GM18951 (cell line): ENCODE measurements at regions of chr16 and their contacts with region 1.

Region 1: DNA sequence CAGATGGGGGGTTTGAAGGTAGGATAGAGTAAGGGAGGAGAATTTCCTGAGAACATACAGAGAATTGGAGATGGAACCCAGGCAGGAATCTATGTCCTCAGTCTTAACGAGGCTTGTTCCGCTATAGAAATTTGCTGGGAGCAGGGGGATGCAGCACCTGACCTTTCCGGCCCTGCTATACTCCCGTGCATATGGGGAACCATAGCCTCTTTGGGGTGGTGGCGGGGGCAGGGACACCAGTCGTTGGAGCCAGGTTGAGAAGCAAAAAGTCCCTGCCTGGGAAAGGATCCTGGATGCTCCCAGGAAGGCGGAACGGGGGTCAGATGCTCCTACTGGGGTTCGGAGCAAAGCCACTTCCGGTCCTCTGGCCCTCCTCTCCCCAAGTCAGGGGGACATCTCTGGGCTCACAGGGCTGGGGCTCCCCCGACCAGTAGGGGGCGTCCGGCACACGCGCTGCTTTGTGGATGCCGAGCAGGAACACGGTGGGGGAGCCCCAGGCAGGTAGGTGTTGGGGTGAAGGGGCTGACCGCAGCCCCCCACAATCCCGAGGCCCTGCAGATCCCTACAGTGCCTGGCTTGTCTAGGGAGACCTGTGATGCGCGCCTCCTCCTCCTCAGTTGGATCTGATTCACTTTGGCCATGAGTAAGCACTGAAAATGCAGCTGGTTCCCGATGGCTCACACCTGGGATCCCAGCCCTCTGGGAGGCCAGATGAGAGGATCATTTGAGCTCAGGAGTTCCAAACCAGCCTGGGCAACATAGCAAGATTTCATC is 15.5 kb upstream of the TFAP4 start:
- POLR2A ChIP-seq: no peak

Region 2: DNA sequence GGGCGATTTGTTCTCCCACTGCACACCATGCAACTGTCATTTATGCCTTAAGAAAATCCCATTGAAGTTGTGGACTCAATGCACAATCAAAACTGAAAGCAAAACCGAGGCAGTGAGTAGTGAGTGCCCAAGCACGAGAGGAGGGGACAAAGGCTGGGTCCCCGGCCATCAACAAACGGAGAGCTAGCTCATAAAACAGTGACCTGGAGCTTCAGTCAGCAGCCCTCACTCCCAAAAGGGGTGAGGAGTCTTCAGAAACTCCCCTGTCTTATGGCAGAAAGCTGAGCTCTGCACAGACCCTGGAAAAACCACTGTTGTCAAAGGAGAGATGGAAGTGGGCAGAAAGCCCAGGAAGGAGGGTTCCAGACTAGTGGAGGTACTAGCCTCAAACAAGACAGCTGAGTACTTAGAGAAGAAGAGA is 269.0 kb before region 1 on chr16:
- in situ Hi-C with region 1: no loop called
- POLR2A ChIP-seq: no peak

Region 3: DNA sequence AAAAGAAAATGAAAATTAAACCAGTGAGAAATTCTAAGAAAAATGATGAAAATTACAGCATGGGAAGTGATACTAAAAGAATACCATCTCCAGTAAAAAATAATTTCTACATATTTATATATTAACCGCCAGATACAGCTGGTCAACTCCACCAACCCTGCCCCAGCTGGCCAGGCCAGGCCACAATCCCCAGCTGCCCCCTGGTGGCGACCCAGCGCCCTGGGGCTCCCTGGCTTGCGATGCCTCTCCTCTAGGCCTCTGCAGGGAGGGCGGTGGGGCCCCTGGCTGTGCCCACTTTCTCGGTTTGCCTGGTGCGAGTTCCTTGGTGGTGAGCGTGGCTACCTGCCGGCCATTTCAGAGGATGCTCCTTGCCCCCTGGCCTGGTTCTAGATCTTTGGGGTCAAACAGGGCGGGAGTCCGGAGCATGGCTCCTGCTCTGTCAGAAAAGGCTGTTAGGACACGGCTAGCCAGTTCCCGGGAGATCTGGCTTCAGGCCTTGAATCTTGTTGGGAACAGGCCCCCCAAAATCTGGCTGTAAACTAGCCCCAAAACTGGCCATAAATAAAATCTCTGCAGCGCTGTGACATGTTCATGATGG is 42.0 kb after region 1 on chr16:
- in situ Hi-C with region 1: loop called (anchors 5 kb)
- POLR2A ChIP-seq: no peak